ENCODE measurements at regions of chr17 and their contacts with region 1.

Region 1: GRCh38 chr17:54007855-54008254 is 185.1 kb downstream of the KIF2B start:
- DNase-seq: no peak
- ATAC-seq: no peak
- H3K4me3 ChIP-seq: no peak overlapping the region
- H3K27ac ChIP-seq: no peak overlapping the region
- H3K4me1 ChIP-seq: no peaks in the 10 kb centered on the region
- H3K27me3 ChIP-seq: no peaks in the 10 kb centered on the region
- CTCF ChIP-seq: no peak

Region 2: GRCh38 chr17:53330756-53331155 is 677.1 kb before region 1 on chr17:
- intact Hi-C with region 1: no loop called
- DNase-seq: no peak
- ATAC-seq: no peak
- H3K4me3 ChIP-seq: no peak overlapping the region
- H3K27ac ChIP-seq: no peak overlapping the region
- H3K4me1 ChIP-seq: no peaks in the 10 kb centered on the region
- H3K27me3 ChIP-seq: no peaks in the 10 kb centered on the region
- CTCF ChIP-seq: no peak

Region 3: GRCh38 chr17:53949486-53950090 is 58.3 kb before region 1 on chr17:
- intact Hi-C with region 1: loop called in 1 of 10 experiments (anchors 10 kb)
- DNase-seq: no peak
- ATAC-seq: no peak
- H3K4me3 ChIP-seq: no peak overlapping the region
- H3K27ac ChIP-seq: no peak overlapping the region
- H3K4me1 ChIP-seq: no peaks in the 10 kb centered on the region
- H3K27me3 ChIP-seq: no peaks in the 10 kb centered on the region
- CTCF ChIP-seq: no peak

Region 4: DNA sequence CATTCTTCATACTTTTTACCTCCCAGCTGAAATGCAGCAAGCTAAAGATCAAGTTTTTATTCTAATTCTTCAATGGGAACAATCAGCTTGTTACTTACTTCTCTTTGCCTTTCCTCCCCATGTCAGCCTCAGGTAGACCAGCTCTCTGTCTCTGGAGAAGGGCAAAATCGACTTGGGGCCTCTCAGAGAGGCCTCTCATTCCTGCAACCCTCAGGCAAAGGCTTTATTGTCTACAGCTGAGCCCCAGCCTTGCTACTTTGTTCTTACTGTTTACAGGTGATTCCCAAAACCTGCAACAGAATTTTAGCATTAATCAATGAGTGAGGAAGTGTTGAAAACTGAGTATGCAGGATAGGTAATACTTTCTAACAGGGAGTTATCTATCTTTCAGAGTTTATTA is 36.5 kb before region 1 on chr17:
- intact Hi-C with region 1: no loop called
- DNase-seq: no peak
- ATAC-seq: no peak
- H3K4me3 ChIP-seq: no peak overlapping the region
- H3K27ac ChIP-seq: no peak overlapping the region
- H3K4me1 ChIP-seq: no peaks in the 10 kb centered on the region
- H3K27me3 ChIP-seq: no peaks in the 10 kb centered on the region
- CTCF ChIP-seq: no peak

Measured in heart right ventricle (tissue), 16 donors.